SK-N-SH (cell line): ENCODE measurements at regions of chr2 and their contacts with region 1.

Region 1: GRCh38 chr2:174771631-174772471 is 7.6 kb upstream of the CHRNA1 start:
- DNase-seq: peak; percentile 81
- H3K4me3 ChIP-seq: peak overlapping the region in 1 of 2 experiments; percentile 29; a peak in 2 of 4 replicates
- H3K27ac ChIP-seq: peak overlapping the region; percentile 36 to 80; a peak in 3 of 4 replicates
- H3K4me1 ChIP-seq: peaks cover 0 to 22% of the 10 kb centered on the region in 2 experiments; a peak in 2 of 4 replicates
- H3K27me3 ChIP-seq: no peaks in the 10 kb centered on the region
- CTCF ChIP-seq: peak; percentile 90
- EP300 ChIP-seq: no peak; a peak in 1 of 4 replicates
- RAD21 ChIP-seq: peak; percentile 96

Region 2: GRCh38 chr2:174606336-174606735 is 165.5 kb before region 1 on chr2:
- CTCF ChIA-PET with region 1: no interaction called
- POLR2A ChIA-PET with region 1: no interaction called
- DNase-seq: peak; percentile 32
- H3K4me3 ChIP-seq: no peak overlapping the region
- H3K27ac ChIP-seq: peak overlapping the region; percentile 82 to 94
- H3K4me1 ChIP-seq: peaks cover 12 to 61% of the 10 kb centered on the region in 2 experiments
- H3K27me3 ChIP-seq: no peaks in the 10 kb centered on the region
- CTCF ChIP-seq: no peak
- EP300 ChIP-seq: peak; percentile 70 to 82; a peak in 3 of 4 replicates
- RAD21 ChIP-seq: no peak; the same call in 1 of the 2 replicates

Region 3: DNA sequence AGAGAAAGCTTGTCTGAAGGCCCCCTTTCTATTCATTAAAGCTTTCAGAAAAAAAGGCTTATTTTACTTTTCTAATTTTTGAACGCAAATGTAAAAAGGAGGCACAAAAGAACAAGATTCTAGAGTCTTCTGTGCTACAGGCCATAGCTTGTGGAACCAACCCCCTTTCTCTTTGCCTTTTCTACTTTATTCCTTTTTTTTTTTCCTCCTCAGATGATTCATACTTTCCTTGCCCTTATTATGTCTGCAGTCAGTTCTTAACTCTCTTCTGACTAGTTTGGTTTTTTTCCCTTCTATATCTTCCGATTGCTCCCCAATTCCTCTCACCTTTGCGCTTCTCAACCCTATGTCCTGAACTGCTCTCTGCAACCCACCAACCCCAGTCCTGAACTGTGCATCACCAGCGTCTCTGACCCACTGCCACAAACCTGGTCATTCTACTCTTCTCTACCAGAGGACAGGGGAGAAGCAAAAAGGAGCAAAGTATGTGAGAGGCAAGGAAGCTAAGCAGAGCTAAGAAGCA is 117.4 kb before region 1 on chr2:
- CTCF ChIA-PET with region 1: no interaction called
- POLR2A ChIA-PET with region 1: no interaction called
- DNase-seq: no peak
- H3K4me3 ChIP-seq: no peak overlapping the region
- H3K27ac ChIP-seq: peak overlapping the region; percentile 16 to 34; a peak in 3 of 4 replicates
- H3K4me1 ChIP-seq: peaks cover 6 to 8% of the 10 kb centered on the region in 2 experiments; a peak in 2 of 4 replicates
- H3K27me3 ChIP-seq: no peaks in the 10 kb centered on the region
- CTCF ChIP-seq: no peak
- EP300 ChIP-seq: no peak
- RAD21 ChIP-seq: no peak

Region 4: GRCh38 chr2:174717273-174717672 is 54.6 kb before region 1 on chr2:
- CTCF ChIA-PET with region 1: no interaction called
- POLR2A ChIA-PET with region 1: no interaction called
- DNase-seq: no peak
- H3K4me3 ChIP-seq: no peak overlapping the region
- H3K27ac ChIP-seq: no peak overlapping the region
- H3K4me1 ChIP-seq: no peaks in the 10 kb centered on the region
- H3K27me3 ChIP-seq: no peaks in the 10 kb centered on the region
- CTCF ChIP-seq: no peak
- EP300 ChIP-seq: no peak
- RAD21 ChIP-seq: no peak

Region 5: GRCh38 chr2:174787487-174788205 is 15.8 kb after region 1 on chr2:
- CTCF ChIA-PET with region 1: interaction called, 24 read pairs
- POLR2A ChIA-PET with region 1: no interaction called
- DNase-seq: peak; percentile 90
- H3K4me3 ChIP-seq: 0 out of 4 replicates have a peak overlapping the region, but pooled peaks of 1 of the 2 experiments have one; percentile 9
- H3K27ac ChIP-seq: peak overlapping the region; percentile 90 to 97
- H3K4me1 ChIP-seq: peaks cover 25 to 28% of the 10 kb centered on the region in 2 experiments
- H3K27me3 ChIP-seq: no peaks in the 10 kb centered on the region
- CTCF ChIP-seq: no peak
- EP300 ChIP-seq: peak in 1 of 2 experiments; percentile 87; a peak in 3 of 4 replicates
- RAD21 ChIP-seq: no peak

Region 6: DNA sequence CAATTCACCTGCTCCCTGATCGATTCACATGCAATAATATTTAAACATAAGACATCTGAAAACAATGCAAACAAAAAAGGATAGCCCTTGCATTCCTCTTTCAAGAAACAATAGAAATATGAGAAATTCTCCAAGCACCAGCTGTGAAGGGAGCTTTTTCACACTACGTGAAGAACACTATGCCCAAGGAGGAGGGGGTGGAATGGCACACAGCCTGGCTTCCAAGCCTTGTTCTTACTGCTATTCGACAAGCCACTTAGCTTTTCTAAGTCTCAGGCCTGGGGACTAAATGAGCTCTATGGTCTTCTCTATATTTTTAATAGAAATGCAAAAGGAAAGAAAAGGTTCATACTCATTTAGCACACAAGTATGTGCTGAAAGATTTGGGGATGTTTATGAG is 84.6 kb after region 1 on chr2:
- CTCF ChIA-PET with region 1: interaction called, 10 read pairs
- POLR2A ChIA-PET with region 1: no interaction called
- DNase-seq: no peak
- H3K4me3 ChIP-seq: no peak overlapping the region
- H3K27ac ChIP-seq: no peak overlapping the region
- H3K4me1 ChIP-seq: no peaks in the 10 kb centered on the region; a peak in 1 of 4 replicates
- H3K27me3 ChIP-seq: no peaks in the 10 kb centered on the region
- CTCF ChIP-seq: no peak
- EP300 ChIP-seq: no peak
- RAD21 ChIP-seq: no peak

Region 7: GRCh38 chr2:174971865-174972781 is 200.3 kb after region 1 on chr2:
- CTCF ChIA-PET with region 1: interaction called, 18 read pairs
- POLR2A ChIA-PET with region 1: no interaction called
- DNase-seq: peak; percentile 25
- H3K4me3 ChIP-seq: no peak overlapping the region
- H3K27ac ChIP-seq: peak overlapping the region; percentile 65 to 73; a peak in 3 of 4 replicates
- H3K4me1 ChIP-seq: peaks cover 4 to 14% of the 10 kb centered on the region in 2 experiments; a peak in 3 of 4 replicates
- H3K27me3 ChIP-seq: no peaks in the 10 kb centered on the region
- CTCF ChIP-seq: no peak
- EP300 ChIP-seq: peak in 1 of 2 experiments; percentile 64; a peak in 1 of 4 replicates
- RAD21 ChIP-seq: no peak

Region 8: GRCh38 chr2:175004980-175005732 is 233.3 kb after region 1 on chr2 and contains the start of gene CHN1:
- CTCF ChIA-PET with region 1: interaction called, 29 read pairs
- POLR2A ChIA-PET with region 1: interaction called, 14 read pairs
- DNase-seq: peak; percentile 95
- H3K4me3 ChIP-seq: peak within 1 kb of the TSS; percentile 88 to 89
- H3K27ac ChIP-seq: peak within 1 kb of the TSS; percentile 61 to 96
- H3K4me1 ChIP-seq: peaks cover 0 to 29% of the 10 kb centered on the region in 2 experiments
- H3K27me3 ChIP-seq: no peaks in the 10 kb centered on the region
- CTCF ChIP-seq: peak; percentile 50
- EP300 ChIP-seq: no peak; a peak in 1 of 4 replicates
- RAD21 ChIP-seq: no peak; the same call in 1 of the 2 replicates
- polyA plus RNA-seq, gene CHN1: 31.6 and 46.9 TPM in 2 replicates